MCF 10A (cell line): ENCODE measurements at regions of chr12 and their contacts with region 1.

Region 1: DNA sequence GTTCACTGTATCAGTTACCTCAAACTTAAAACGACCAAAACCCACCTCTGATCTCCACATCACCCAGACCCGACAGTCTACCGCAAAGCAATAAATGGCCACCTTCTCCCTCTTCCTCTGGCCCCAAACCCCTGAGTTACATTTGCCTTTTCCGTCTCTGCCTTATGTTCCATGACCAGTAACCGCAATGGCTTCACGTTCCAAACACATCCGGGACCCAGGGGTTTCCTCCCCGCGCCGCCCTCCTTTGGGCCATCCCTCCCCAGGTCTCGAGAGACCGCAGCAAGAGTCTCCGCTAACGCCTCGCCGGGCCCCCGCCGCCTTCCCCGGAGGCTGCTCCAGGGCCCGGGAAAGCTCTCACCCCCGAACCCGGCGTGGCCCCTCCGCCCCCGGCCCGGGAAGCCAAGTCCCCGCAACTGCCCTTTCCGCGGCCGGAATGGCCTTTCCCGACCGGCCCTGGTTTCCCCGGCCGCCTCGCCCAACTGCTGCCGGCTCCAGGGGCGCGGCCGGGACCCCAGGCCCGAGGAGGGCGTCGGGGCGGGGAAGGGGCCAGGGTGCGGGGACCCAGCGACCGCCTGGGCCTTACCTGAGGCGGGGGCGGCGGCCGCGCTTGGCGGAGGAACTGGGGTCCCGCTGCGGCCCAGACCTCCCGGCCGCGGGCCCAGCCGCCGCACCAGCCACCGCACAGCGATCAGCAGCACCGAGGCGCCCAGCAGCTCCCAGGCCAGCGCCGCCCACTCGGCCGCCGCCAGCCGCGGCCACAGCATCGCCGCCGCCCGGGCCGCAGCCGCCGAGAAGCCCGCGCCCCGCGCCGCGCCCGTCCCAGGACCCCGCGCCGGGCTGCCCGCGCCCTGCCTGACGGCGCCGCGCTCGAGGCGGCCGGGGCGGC is at the start of gene ANKLE2:
- DNase-seq: peak; percentile 58
- H3K4me3 Mint-ChIP-seq: peak within 1 kb of the TSS; percentile 82
- H3K27ac Mint-ChIP-seq: peak within 1 kb of the TSS; percentile 90
- H3K4me1 Mint-ChIP-seq: peaks cover 4% of the 10 kb centered on the region
- H3K27me3 Mint-ChIP-seq: no peaks in the 10 kb centered on the region
- CTCF ChIP-seq: no peak
- total RNA-seq, gene ANKLE2: 111 and 142 TPM in 2 replicates

Region 2: GRCh38 chr12:132310181-132311024 is 450.9 kb before region 1 on chr12:
- CTCF ChIA-PET with region 1: no interaction called
- POLR2A ChIA-PET with region 1: no interaction called
- intact Hi-C with region 1: no loop called
- DNase-seq: no peak
- H3K4me3 Mint-ChIP-seq: no peak overlapping the region
- H3K27ac Mint-ChIP-seq: no peak overlapping the region
- H3K4me1 Mint-ChIP-seq: no peaks in the 10 kb centered on the region
- H3K27me3 Mint-ChIP-seq: peaks cover 17% of the 10 kb centered on the region
- CTCF ChIP-seq: no peak

Region 3: DNA sequence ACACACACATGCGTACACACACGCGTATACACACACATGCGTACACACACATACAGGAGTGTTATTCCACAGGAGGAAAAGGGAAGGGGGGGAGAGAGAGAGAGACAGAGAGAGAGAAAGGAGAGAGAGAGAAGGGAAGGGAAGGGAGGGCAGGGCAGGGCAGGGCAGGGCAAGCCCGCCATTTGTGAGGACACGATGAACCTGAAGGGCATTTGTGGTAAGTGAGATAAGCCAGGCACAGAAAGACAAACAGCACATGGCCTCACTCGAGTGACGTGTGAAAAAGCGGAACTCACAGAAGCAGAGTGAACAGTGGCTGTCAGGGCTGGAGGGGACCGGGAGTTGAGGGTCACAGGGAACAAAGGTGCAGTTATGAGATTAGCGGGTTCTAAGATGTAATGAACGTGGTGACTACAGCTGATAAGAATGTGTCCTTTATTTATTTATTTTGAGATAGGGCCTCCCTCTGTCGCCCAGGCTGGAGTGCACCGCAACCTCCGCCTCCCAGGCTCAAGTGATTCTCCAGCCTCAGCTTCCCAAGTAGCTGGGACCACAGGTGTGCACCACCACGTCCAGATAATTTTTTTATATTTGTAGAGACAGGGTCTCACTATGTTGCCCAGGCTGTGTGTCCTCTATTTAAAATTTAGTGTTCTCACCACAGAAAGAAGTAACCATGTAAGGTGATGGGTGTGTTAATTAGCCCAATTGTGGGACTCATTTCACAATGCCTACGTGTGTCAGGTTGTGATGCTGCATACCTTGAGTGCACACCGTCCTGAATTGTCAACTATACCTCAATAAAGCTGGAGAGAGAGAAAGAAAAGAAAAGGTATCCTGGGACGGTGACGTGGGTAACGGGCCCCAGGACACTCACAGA is 290.1 kb before region 1 on chr12:
- CTCF ChIA-PET with region 1: no interaction called
- POLR2A ChIA-PET with region 1: no interaction called
- intact Hi-C with region 1: no loop called
- DNase-seq: no peak
- H3K4me3 Mint-ChIP-seq: no peak overlapping the region
- H3K27ac Mint-ChIP-seq: no peak overlapping the region
- H3K4me1 Mint-ChIP-seq: peaks cover 7% of the 10 kb centered on the region
- H3K27me3 Mint-ChIP-seq: peaks cover 18% of the 10 kb centered on the region
- CTCF ChIP-seq: no peak

Region 4: GRCh38 chr12:132710422-132711168 is 50.7 kb before region 1 on chr12 and contains the start of gene PGAM5:
- CTCF ChIA-PET with region 1: no interaction called
- POLR2A ChIA-PET with region 1: interaction called, 23 read pairs
- intact Hi-C with region 1: no loop called
- DNase-seq: peak; percentile 79
- H3K4me3 Mint-ChIP-seq: peak within 1 kb of the TSS; percentile 93
- H3K27ac Mint-ChIP-seq: peak within 1 kb of the TSS; percentile 91
- H3K4me1 Mint-ChIP-seq: no peaks in the 10 kb centered on the region
- H3K27me3 Mint-ChIP-seq: no peaks in the 10 kb centered on the region
- CTCF ChIP-seq: no peak
- total RNA-seq, gene PGAM5: 69.8 and 84.0 TPM in 2 replicates

Region 5: DNA sequence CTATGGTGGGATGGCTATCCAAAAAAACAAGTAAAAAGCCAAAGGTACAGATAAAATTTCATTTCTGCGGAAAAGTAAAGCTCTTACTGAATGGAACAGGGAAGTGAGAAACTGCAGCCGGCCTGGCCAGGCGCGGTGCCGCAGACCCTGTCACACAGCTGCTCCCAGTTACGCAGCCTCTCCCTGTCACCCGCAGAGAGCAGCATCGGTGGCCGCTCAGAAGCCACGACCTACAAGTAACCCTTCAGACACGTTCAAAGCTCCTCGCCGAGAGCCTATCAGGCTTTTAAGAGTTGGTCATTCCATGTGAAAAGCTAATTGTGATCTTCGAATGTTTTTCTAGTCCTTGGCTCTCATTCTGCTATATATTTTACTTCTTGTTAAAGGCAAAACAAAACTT is 11.3 kb after region 1 on chr12:
- CTCF ChIA-PET with region 1: interaction called, 3 read pairs
- POLR2A ChIA-PET with region 1: interaction called, 10 read pairs
- intact Hi-C with region 1: no loop called
- DNase-seq: no peak
- H3K4me3 Mint-ChIP-seq: no peak overlapping the region
- H3K27ac Mint-ChIP-seq: no peak overlapping the region
- H3K4me1 Mint-ChIP-seq: peaks cover 2% of the 10 kb centered on the region
- H3K27me3 Mint-ChIP-seq: no peaks in the 10 kb centered on the region
- CTCF ChIP-seq: no peak

Region 6: GRCh38 chr12:132828706-132829534 is 67.6 kb after region 1 on chr12 and contains the start of gene GOLGA3:
- CTCF ChIA-PET with region 1: no interaction called
- POLR2A ChIA-PET with region 1: interaction called, 24 read pairs
- intact Hi-C with region 1: no loop called
- DNase-seq: peak; percentile 91
- H3K4me3 Mint-ChIP-seq: peak within 1 kb of the TSS; percentile 94
- H3K27ac Mint-ChIP-seq: peak within 1 kb of the TSS; percentile 100
- H3K4me1 Mint-ChIP-seq: peaks cover 10% of the 10 kb centered on the region
- H3K27me3 Mint-ChIP-seq: no peaks in the 10 kb centered on the region
- CTCF ChIP-seq: no peak
- total RNA-seq, gene GOLGA3: 94.9 and 116 TPM in 2 replicates